ENCODE measurements at regions of chr10 and their contacts with region 1.

Region 1: DNA sequence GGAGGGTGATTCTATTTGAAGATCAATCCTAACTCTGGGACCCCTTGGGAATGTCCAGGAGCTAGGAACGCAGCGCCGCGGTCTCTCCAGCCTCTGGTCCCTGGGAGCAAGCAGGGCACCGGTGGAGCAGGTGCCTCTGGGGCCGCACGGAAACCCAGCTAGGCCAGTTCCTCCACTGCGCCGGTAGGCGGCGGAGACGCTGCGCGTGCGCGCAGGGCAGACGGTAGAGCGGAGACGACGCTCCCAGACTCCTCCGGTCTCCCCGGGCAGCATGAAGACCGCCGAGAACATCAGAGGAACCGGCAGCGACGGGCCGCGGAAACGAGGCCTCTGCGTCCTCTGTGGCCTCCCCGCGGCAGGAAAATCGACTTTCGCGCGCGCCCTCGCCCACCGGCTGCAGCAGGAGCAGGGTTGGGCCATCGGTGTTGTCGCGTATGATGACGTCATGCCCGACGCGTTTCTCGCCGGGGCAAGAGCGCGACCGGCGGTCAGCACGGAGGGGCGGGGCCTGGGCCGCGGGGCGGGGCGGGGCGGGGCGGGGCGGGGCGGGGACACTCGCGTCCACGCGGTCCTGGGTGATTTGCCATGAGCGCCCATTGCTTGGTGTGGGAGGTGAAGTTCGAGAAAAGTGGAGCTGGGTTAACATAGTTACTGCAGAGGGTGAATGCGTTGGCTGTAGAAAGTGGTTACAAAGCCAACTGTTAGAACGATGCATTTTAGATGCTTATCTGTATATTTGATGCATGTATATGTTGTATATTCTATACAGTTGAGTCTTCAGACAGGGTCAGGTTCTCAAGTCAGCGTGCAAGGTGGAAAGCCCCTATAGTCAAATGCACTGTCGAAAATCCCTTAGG is at the start of gene PSTK:
- DNase-seq: peak; percentile 89
- H3K4me3 Mint-ChIP-seq: peak within 1 kb of the TSS; percentile 80
- H3K27ac Mint-ChIP-seq: peak within 1 kb of the TSS; percentile 84
- H3K4me1 Mint-ChIP-seq: peaks cover 15% of the 10 kb centered on the region
- H3K27me3 Mint-ChIP-seq: no peaks in the 10 kb centered on the region
- total RNA-seq, gene PSTK: 2.6 to 3.8 TPM

Region 2: GRCh38 chr10:122861711-122862161 is 118.7 kb before region 1 on chr10:
- CTCF ChIA-PET with region 1: no interaction called
- POLR2A ChIA-PET with region 1: no interaction called
- DNase-seq: no peak
- H3K4me3 Mint-ChIP-seq: no peak overlapping the region
- H3K27ac Mint-ChIP-seq: no peak overlapping the region
- H3K4me1 Mint-ChIP-seq: peaks cover 3% of the 10 kb centered on the region
- H3K27me3 Mint-ChIP-seq: no peaks in the 10 kb centered on the region

Region 3: DNA sequence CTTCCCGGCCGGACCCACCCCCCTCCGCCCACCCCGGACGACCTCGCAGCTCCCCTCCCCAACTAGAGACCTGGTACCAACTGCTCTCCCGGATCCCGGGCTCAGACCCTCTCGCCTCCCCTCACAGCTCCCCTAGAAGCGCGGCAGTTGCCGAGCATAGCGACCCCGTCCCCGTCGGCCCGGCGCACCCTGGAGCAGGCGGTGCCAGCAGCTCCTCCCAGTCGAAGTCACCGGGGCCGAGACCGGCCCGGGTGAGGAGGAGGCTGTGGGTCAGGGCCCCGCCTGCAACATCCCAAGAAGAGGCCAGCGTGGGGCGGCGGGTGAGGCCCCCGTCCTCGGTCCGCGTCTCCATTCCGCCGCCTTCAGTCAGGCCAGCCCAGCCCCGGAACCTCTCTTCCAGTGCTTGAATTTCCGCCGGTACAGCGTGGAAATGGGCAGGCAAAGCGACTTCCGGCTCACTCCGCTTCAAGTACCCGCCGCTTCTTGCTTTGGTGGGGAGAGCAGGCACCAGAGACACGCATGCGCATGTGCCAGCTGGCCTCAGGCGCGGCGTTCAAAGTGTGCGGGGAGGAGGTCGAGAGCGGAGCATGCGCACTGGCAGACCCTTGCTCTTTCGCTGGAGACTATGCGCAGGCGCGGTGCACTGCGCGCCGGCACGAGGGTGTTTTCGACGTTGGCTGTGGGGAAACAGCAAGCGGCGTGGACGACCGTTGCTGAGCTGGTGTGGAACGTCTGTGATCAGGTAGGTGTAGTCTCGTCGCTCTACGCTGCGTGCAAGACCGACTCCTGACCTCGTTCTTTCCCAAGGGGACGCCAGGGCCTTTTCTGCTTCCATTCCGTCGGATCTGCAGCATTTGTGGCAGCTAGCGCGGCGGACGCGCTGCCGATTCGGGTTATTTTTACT is 26.4 kb before region 1 on chr10 and contains the start of gene C10orf88:
- CTCF ChIA-PET with region 1: interaction called, 25 read pairs
- POLR2A ChIA-PET with region 1: interaction called, 37 read pairs
- DNase-seq: peak; percentile 98
- H3K4me3 Mint-ChIP-seq: peak within 1 kb of the TSS; percentile 86
- H3K27ac Mint-ChIP-seq: peak within 1 kb of the TSS; percentile 82
- H3K4me1 Mint-ChIP-seq: peaks cover 40% of the 10 kb centered on the region
- H3K27me3 Mint-ChIP-seq: peaks cover 17% of the 10 kb centered on the region
- total RNA-seq, gene C10orf88: 12.6 to 15.1 TPM

Region 4: GRCh38 chr10:122999347-122999746 is 18.9 kb after region 1 on chr10:
- CTCF ChIA-PET with region 1: interaction called, 10 read pairs
- POLR2A ChIA-PET with region 1: interaction called, 5 read pairs
- DNase-seq: no peak
- H3K4me3 Mint-ChIP-seq: no peak overlapping the region
- H3K27ac Mint-ChIP-seq: no peak overlapping the region
- H3K4me1 Mint-ChIP-seq: peaks cover 15% of the 10 kb centered on the region
- H3K27me3 Mint-ChIP-seq: no peaks in the 10 kb centered on the region